ENCODE measurements at regions of chr13 and their contacts with region 1.

Region 1: GRCh38 chr13:99436686-99437416 is 64.4 kb upstream of the TM9SF2 start:
- DNase-seq: peak; percentile 26
- H3K4me3 ChIP-seq: peak overlapping the region; percentile 36
- CTCF ChIP-seq: peak; percentile 99

Region 2: DNA sequence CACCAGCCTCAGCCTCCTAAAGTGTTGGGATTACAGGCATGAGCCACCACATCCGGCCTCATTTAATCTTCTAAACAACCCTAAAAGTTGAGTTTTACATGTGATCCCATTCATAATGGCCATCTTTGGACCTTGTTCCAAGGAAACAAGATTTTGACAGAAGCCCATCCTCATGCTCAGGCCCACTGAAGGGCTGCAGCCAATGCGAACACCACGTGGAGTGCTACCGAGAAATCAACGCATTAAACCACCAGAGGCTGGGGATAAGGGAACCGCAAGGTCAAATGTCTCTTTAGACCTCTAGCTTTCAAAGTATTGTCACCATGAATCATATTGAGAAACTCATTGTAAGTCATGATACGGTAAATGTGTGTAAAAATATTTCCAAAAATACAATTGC is 409.6 kb before region 1 on chr13:
- CTCF ChIA-PET with region 1: no interaction called
- POLR2A ChIA-PET with region 1: no interaction called
- DNase-seq: no peak
- H3K4me3 ChIP-seq: no peak overlapping the region
- CTCF ChIP-seq: no peak

Region 3: DNA sequence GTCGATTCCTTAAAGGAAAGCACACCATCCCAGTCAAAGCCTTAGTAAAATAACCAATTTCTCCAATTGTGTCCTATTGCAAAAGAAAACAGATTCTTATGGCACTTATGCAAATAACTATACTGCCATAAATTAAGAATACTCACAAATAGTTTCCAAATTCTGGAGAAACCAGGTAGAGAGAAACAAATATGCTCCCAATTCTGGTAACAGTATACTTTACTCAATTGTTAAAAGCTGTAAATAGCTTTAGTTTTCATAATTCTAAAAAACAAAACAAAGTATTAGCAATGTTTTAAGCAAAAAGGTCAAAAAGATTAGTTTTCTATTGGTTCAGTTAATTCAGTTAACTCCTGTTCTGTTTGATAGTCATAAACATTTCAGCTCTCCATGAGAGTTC is 254.4 kb before region 1 on chr13:
- CTCF ChIA-PET with region 1: interaction called, 120 read pairs
- POLR2A ChIA-PET with region 1: no interaction called
- DNase-seq: no peak
- H3K4me3 ChIP-seq: no peak overlapping the region
- CTCF ChIP-seq: no peak

Region 4: DNA sequence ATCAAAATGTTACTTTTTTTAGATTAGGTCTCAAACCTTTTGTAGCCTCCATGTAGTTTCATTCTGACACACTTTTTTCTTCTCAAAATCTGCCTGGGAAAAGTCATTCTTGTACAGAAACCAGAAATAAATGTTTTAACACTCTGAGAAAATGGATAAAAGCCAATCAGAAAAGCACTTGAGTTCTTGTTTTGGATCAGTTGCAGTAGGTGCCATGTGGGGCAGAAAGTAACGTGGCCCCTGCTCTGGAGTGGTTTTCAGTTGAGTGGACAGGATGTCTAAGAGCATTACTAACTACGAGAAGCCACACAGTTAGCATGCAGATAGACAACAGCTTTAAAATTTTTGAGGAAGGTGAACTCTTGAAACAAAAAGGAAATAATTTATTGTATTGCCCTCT is 148.8 kb before region 1 on chr13:
- CTCF ChIA-PET with region 1: interaction called, 1,002 read pairs
- POLR2A ChIA-PET with region 1: no interaction called
- DNase-seq: no peak
- H3K4me3 ChIP-seq: no peak overlapping the region
- CTCF ChIP-seq: no peak

Region 5: DNA sequence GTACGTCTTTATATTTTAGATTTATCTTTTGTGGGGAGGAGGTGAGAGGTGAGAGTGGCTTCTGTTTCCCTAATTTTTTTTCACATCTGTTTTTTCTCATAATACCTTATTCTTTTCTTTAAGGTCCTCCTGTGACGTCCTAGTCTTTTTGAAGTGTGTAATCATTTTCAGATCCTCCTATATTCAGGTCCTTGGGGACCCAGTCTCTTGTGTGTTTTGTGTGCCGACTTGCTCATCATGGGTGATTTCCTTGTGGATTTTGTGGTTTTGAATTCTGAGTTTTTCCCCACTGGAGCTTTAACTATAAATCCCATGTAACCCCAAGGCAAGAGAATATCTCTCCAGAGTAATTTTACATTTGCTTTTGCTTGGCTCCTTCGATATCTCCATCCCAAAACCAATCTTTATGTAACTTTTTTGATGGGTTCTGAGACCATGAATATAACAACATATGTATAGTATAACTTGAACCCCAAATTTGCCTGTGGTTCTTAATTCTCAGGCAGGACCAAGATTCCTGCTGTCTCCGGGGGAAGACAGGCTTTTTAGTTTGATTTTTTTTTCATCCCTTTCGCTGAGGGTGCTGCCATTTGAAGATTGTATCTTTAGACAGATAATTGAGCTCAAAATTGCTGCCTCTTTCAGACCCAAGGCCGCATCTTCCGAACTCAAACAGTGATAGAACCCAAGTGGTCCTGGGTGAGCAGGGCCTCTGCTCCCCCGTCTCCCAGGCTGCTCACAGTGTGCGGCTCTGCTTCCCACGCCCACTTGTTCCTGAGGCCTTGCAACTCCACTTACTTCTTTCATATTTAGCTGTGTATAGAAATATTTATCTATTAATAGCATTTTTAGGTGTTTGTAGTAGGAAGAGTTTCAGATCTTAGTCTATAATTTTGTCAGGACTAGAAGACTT is 70.5 kb before region 1 on chr13:
- CTCF ChIA-PET with region 1: interaction called, 11 read pairs
- POLR2A ChIA-PET with region 1: no interaction called
- DNase-seq: no peak
- H3K4me3 ChIP-seq: no peak overlapping the region
- CTCF ChIP-seq: no peak

Region 6: DNA sequence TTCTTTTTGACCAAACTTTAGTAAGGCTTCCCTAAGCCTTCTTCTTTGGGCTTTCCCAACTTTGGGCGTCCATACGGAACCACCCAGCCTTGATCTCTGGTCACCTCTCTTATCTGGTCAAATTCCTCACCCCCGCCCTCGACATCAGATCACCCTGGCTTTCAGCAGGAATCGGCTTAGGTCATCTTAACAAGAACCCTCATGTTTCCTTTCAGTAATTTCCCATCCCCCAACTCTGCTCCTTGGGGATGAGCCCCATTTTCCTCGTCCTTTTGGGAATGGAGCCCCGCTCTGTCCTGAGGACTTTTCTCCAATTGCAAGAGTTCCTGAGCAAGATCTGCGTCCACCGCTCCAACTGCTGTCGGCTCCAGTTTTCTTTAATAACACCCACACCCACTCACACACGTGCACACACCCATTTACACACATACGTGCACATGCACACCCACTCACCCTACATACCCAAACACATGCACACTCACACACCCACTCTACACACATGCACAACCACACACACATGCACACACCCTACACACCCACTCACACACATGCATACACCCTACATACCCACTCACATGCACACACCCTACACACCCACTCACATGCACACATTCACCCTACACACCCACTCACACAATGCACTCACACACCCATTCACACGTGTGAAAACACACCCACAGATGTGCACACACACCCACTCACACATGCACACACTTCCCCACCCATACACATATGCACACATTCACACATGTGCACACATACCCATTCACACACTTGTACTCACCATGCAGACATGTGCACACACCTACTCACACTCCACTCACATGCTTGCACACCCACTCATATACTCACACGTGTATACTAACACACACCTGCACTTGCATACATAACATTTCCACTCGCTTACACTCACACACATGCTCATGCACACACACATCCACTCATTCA is 22.5 kb before region 1 on chr13:
- CTCF ChIA-PET with region 1: interaction called, 16 read pairs
- POLR2A ChIA-PET with region 1: no interaction called
- DNase-seq: no peak
- H3K4me3 ChIP-seq: no peak overlapping the region
- CTCF ChIP-seq: no peak

Region 7: GRCh38 chr13:99484473-99484872 is 47.6 kb after region 1 on chr13:
- CTCF ChIA-PET with region 1: interaction called, 19 read pairs
- POLR2A ChIA-PET with region 1: no interaction called
- DNase-seq: no peak
- H3K4me3 ChIP-seq: no peak overlapping the region
- CTCF ChIP-seq: no peak